PC-9 (cell line): ENCODE measurements at regions of chr2 and their contacts with region 1.

Region 1: DNA sequence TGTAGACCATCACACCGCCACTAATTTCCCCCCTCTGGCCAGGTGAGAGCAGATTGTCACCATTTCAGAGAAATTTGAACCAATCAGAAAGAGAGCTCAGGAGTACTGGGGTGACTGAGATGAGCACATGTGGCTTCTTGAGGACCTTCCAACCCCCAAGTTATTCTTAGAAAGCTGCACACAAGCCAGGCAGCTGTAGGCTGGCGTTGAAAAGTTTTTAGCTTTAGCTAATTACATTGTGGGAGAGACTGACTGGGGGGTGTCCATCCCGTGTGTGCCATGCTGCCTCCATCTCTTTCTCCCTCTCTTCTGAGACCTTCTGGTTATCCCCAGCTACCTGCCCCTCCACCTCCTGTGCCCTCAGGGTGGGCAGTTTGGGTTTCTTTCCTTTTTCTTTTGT is 154.0 kb downstream of the AGAP1 start:
- DNase-seq: no peak
- H3K4me3 ChIP-seq: no peak overlapping the region
- H3K27ac ChIP-seq: no peak overlapping the region
- H3K4me1 ChIP-seq: 0 out of 2 replicates have a peak, but pooled peaks cover 8% of the 10 kb centered on the region
- H3K27me3 ChIP-seq: no peaks in the 10 kb centered on the region
- CTCF ChIP-seq: no peak

Region 2: DNA sequence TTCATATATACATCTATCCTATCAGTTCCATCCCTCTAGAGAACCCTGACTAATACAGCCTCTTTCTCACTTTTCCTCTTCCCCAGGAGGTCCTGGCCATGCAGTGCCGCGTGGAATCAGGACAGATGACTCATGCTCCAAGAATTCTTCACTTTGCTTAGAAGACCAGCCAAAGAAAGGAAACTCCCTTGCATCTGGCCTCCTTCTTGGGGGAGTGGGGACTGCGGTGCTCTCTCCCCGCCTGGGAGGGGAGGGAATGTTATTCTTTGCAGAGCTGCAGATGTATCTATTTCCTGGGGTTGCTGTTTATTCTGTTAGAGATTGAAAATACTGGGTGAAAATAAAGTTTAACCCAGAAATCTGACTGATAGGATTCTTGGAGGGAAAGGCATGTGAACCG is 807.5 kb before region 1 on chr2:
- CTCF ChIA-PET with region 1: interaction called, 10 read pairs
- POLR2A ChIA-PET with region 1: no interaction called
- intact Hi-C with region 1: no loop called
- DNase-seq: peak; percentile 86 to 92
- H3K4me3 ChIP-seq: no peak overlapping the region
- H3K27ac ChIP-seq: peak overlapping the region; percentile 63
- H3K4me1 ChIP-seq: peaks cover 38% of the 10 kb centered on the region
- H3K27me3 ChIP-seq: no peaks in the 10 kb centered on the region
- CTCF ChIP-seq: no peak

Region 3: DNA sequence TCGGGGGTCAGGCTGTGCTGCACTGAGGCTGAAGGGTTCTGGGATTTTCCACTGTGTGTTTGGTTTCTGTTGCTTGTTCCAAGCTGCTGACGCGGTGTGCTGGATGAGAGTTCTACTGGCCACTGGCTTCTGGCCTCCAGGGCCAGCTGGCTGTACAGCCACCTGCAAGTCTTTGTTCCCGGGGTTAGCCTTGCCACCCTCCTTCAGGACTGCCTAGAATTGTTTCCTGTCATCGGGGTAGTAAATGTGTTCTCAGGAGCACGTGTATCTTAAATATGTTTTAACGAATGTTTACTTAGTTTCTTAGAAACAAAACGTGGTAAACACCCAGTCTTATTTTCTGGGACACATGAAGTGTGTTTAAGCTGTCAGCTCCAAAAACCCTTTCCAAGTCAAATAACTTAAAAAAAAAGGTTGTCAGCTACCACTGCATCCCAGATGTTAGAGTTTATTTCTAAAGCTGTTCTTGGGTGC is 77.2 kb after region 1 on chr2:
- CTCF ChIA-PET with region 1: interaction called, 15 read pairs
- POLR2A ChIA-PET with region 1: no interaction called
- intact Hi-C with region 1: no loop called
- DNase-seq: no peak
- H3K4me3 ChIP-seq: no peak overlapping the region
- H3K27ac ChIP-seq: 0 out of 2 replicates have a peak overlapping the region, but pooled peaks have one; percentile 6
- H3K4me1 ChIP-seq: peaks cover 34% of the 10 kb centered on the region
- H3K27me3 ChIP-seq: no peaks in the 10 kb centered on the region
- CTCF ChIP-seq: no peak

Region 4: DNA sequence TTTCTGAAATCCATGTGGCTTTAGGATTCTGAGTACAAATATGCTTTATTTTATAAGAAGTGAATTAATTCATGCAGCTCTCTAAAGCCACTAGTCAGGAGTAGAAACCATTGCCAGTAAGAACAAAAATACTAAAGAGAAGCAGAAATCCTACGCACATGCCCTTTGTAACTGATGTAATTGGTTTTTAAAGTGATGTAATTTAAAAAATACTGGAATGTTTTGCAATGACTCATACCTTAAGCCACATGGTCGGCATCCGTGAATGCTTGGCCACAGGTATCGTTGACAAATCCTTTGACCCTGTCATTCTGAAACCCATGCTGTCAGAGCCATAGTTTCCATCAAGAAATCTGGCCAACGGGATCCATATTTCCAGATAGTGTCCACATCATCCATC is 1135.1 kb after region 1 on chr2:
- CTCF ChIA-PET with region 1: no interaction called
- POLR2A ChIA-PET with region 1: no interaction called
- intact Hi-C with region 1: no loop called
- DNase-seq: peak; percentile 24 to 81
- H3K4me3 ChIP-seq: no peak overlapping the region
- H3K27ac ChIP-seq: peak overlapping the region; percentile 90
- H3K4me1 ChIP-seq: peaks cover 26% of the 10 kb centered on the region
- H3K27me3 ChIP-seq: peaks cover 11% of the 10 kb centered on the region; the same call in 1 of the 2 replicates
- CTCF ChIP-seq: no peak; the same call in 1 of the 2 replicates